HEK293 (cell line): ENCODE measurements at regions of chr3 and their contacts with region 1.

Region 1: GRCh38 chr3:183385698-183386613 is 42.5 kb downstream of the MCF2L2 start:
- H3K4me3 ChIP-seq: no peak overlapping the region
- H3K27ac ChIP-seq: no peak overlapping the region
- H3K4me1 ChIP-seq: no peaks in the 10 kb centered on the region
- CTCF ChIP-seq: no peak

Region 2: GRCh38 chr3:183122257-183122932 is 263.6 kb before region 1 on chr3:
- CTCF ChIA-PET with region 1: interaction called, 40 read pairs
- POLR2A ChIA-PET with region 1: no interaction called
- H3K4me3 ChIP-seq: no peak overlapping the region
- H3K27ac ChIP-seq: no peak overlapping the region
- H3K4me1 ChIP-seq: no peaks in the 10 kb centered on the region
- CTCF ChIP-seq: 0 out of 2 replicates have a peak, but pooled peaks have one; percentile 23

Region 3: GRCh38 chr3:183182732-183183675 is 203.0 kb before region 1 on chr3:
- CTCF ChIA-PET with region 1: interaction called, 175 read pairs
- POLR2A ChIA-PET with region 1: interaction called, 10 read pairs
- H3K4me3 ChIP-seq: no peak overlapping the region
- H3K27ac ChIP-seq: no peak overlapping the region
- H3K4me1 ChIP-seq: no peaks in the 10 kb centered on the region
- CTCF ChIP-seq: no peak